CD4-positive, alpha-beta T cell (primary cell): ENCODE measurements at regions of chr5 and their contacts with region 1.

Region 1: GRCh38 chr5:30663536-30663935 is 530.0 kb upstream of the CDH6 start:
- DNase-seq: no peak
- ATAC-seq: no peak
- H3K4me3 ChIP-seq: no peak overlapping the region
- H3K4me3 Mint-ChIP-seq: no peak overlapping the region
- H3K27ac ChIP-seq: no peak overlapping the region
- H3K27ac Mint-ChIP-seq: no peak overlapping the region
- H3K4me1 ChIP-seq: no peaks in the 10 kb centered on the region
- H3K4me1 Mint-ChIP-seq: no peaks in the 10 kb centered on the region
- H3K27me3 ChIP-seq: no peaks in the 10 kb centered on the region
- H3K27me3 Mint-ChIP-seq: no peaks in the 10 kb centered on the region
- CTCF ChIP-seq: no peak

Region 2: DNA sequence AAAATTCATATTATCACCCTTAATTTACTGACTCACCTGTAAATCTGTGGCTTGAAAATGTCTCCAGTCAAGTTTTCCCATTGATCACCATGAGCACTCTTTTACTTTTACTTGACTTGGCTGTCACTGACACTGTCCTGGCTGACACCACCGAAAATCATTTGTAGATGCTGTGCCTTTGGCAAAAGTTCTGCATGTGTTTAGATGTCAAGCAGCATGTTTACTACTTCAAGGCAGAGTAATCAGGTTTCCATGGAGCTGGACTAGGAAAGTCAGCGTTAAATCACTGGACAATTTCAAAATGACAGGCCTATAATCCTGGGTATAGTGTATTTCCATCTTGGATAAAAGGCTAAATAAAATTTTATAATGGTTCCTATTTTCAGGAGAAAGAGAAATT is 1000.7 kb before region 1 on chr5:
- CTCF ChIA-PET with region 1: no interaction called
- POLR2A ChIA-PET with region 1: no interaction called
- intact Hi-C with region 1: loop called in 1 of 2 experiments (anchors 5 kb)
- DNase-seq: no peak
- ATAC-seq: no peak
- H3K4me3 ChIP-seq: no peak overlapping the region
- H3K4me3 Mint-ChIP-seq: no peak overlapping the region
- H3K27ac ChIP-seq: no peak overlapping the region
- H3K27ac Mint-ChIP-seq: no peak overlapping the region
- H3K4me1 ChIP-seq: no peaks in the 10 kb centered on the region
- H3K4me1 Mint-ChIP-seq: no peaks in the 10 kb centered on the region
- H3K27me3 ChIP-seq: no peaks in the 10 kb centered on the region
- H3K27me3 Mint-ChIP-seq: no peaks in the 10 kb centered on the region
- CTCF ChIP-seq: no peak

Region 3: GRCh38 chr5:30561771-30562170 is 101.8 kb before region 1 on chr5:
- CTCF ChIA-PET with region 1: no interaction called
- POLR2A ChIA-PET with region 1: no interaction called
- intact Hi-C with region 1: no loop called
- DNase-seq: no peak
- ATAC-seq: no peak
- H3K4me3 ChIP-seq: no peak overlapping the region
- H3K4me3 Mint-ChIP-seq: no peak overlapping the region
- H3K27ac ChIP-seq: no peak overlapping the region
- H3K27ac Mint-ChIP-seq: no peak overlapping the region
- H3K4me1 ChIP-seq: no peaks in the 10 kb centered on the region
- H3K4me1 Mint-ChIP-seq: no peaks in the 10 kb centered on the region
- H3K27me3 ChIP-seq: no peaks in the 10 kb centered on the region
- H3K27me3 Mint-ChIP-seq: no peaks in the 10 kb centered on the region
- CTCF ChIP-seq: no peak

Region 4: GRCh38 chr5:30650311-30650710 is 13.2 kb before region 1 on chr5:
- CTCF ChIA-PET with region 1: no interaction called
- POLR2A ChIA-PET with region 1: no interaction called
- intact Hi-C with region 1: no loop called
- DNase-seq: no peak
- ATAC-seq: no peak
- H3K4me3 ChIP-seq: no peak overlapping the region
- H3K4me3 Mint-ChIP-seq: no peak overlapping the region
- H3K27ac ChIP-seq: no peak overlapping the region
- H3K27ac Mint-ChIP-seq: no peak overlapping the region
- H3K4me1 ChIP-seq: no peaks in the 10 kb centered on the region
- H3K4me1 Mint-ChIP-seq: no peaks in the 10 kb centered on the region
- H3K27me3 ChIP-seq: no peaks in the 10 kb centered on the region
- H3K27me3 Mint-ChIP-seq: no peaks in the 10 kb centered on the region
- CTCF ChIP-seq: no peak

Region 5: DNA sequence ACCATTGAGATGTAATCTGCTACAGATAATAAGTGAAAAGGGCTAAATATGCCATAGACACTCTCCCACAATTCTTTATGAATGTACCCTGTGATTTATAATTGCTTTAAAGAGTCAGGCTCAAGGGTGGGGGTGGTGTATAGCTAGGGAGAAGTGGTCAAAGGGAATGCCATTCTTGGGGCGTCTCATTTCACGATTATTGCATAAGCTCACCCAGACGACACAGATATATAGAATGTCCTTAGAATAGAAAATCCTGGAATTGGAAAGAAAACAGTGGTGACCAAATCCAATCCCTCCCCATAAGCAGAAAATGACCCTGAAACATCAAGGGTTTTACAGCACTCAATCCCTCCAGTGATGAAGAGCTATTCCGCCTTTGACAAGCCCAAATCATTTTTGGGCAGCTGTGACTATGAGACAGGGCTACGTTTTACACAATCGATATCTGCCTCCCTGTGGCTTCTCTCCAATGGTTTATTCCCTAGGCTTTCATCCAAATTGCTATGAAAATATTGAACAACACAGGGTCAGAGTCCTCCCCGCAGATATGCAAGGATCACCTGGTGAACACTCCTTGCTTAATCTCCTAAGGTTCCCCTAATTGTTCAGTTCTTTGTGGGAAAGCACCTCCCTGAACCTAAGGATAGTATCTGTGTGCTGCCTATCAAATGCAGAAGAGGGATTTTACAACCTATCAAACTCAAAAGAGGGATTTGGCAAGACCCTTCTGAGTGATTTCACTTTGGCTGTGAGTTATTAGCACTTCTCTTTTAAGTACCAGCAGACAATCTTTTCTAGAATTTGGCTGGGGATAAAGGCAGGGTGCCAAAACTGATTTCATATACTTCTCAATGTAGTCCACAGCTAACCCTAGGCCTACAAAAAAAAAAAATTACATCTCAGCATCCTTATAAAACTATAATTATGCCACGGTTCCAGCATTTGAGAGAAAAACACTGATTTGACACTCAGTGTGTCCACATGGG is 385.0 kb after region 1 on chr5:
- CTCF ChIA-PET with region 1: no interaction called
- POLR2A ChIA-PET with region 1: no interaction called
- intact Hi-C with region 1: no loop called
- DNase-seq: no peak
- ATAC-seq: no peak
- H3K4me3 ChIP-seq: no peak overlapping the region
- H3K4me3 Mint-ChIP-seq: no peak overlapping the region
- H3K27ac ChIP-seq: no peak overlapping the region
- H3K27ac Mint-ChIP-seq: no peak overlapping the region
- H3K4me1 ChIP-seq: no peaks in the 10 kb centered on the region
- H3K4me1 Mint-ChIP-seq: no peaks in the 10 kb centered on the region
- H3K27me3 ChIP-seq: no peaks in the 10 kb centered on the region
- H3K27me3 Mint-ChIP-seq: no peaks in the 10 kb centered on the region
- CTCF ChIP-seq: no peak